ENCODE measurements at regions of chr16 and their contacts with region 1.

Region 1: DNA sequence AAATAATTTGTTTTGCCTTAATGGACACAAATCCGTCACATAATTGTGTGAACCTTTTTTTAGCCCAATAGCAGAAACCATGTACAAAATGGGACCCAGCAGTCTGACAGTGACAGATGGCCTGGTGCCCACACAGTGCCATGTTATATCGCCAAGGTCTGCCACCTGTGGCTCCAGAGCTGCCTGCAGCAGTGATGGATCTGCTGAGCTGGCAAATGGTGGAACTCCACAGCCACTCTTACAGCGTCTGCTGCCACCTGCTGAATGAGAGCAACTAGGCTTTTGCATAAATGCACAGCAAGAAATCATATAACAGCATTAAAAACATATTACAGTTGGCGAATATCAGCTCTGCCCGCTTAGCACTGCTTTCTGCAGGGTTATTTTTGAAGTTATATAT is 59.4 kb downstream of the NUP93 start:
- DNase-seq: peak; percentile 73 to 88 (median 83)
- H3K4me3 ChIP-seq: no peak overlapping the region
- H3K27ac ChIP-seq: no peak overlapping the region
- H3K4me1 ChIP-seq: peaks cover 0 to 6% (median 2%) of the 10 kb centered on the region in 4 experiments
- H3K27me3 ChIP-seq: no peaks in the 10 kb centered on the region

Region 2: GRCh38 chr16:56800355-56800754 is 11.0 kb after region 1 on chr16:
- CTCF ChIA-PET with region 1: interaction called, 26 read pairs
- POLR2A ChIA-PET with region 1: no interaction called
- DNase-seq: no peak
- H3K4me3 ChIP-seq: no peak overlapping the region
- H3K27ac ChIP-seq: no peak overlapping the region
- H3K4me1 ChIP-seq: no peaks in the 10 kb centered on the region
- H3K27me3 ChIP-seq: no peaks in the 10 kb centered on the region

Region 3: GRCh38 chr16:56851671-56852400 is 62.5 kb after region 1 on chr16:
- CTCF ChIA-PET with region 1: interaction called, 11 read pairs
- POLR2A ChIA-PET with region 1: no interaction called
- DNase-seq: peak in 2 of 3 donors; percentile 49 to 55
- H3K4me3 ChIP-seq: no peak overlapping the region
- H3K27ac ChIP-seq: no peak overlapping the region
- H3K4me1 ChIP-seq: peaks cover 4 to 38% (median 31%) of the 10 kb centered on the region in 4 experiments
- H3K27me3 ChIP-seq: no peaks in the 10 kb centered on the region

Measured in common myeloid progenitor, CD34-positive (primary cell).